ENCODE measurements at regions of chr17 and their contacts with region 1.

Region 1: GRCh38 chr17:50841949-50842354 is 6.6 kb downstream of the WFIKKN2 start:
- DNase-seq: no peak
- H3K4me3 Mint-ChIP-seq: no peak overlapping the region
- H3K27ac Mint-ChIP-seq: no peak overlapping the region
- H3K4me1 Mint-ChIP-seq: no peaks in the 10 kb centered on the region
- H3K27me3 Mint-ChIP-seq: no peaks in the 10 kb centered on the region

Region 2: GRCh38 chr17:50318501-50319285 is 523.3 kb before region 1 on chr17:
- intact Hi-C with region 1: no loop called
- DNase-seq: no peak
- H3K4me3 Mint-ChIP-seq: no peak overlapping the region
- H3K27ac Mint-ChIP-seq: no peak overlapping the region
- H3K4me1 Mint-ChIP-seq: peaks cover 4% of the 10 kb centered on the region
- H3K27me3 Mint-ChIP-seq: peaks cover 5% of the 10 kb centered on the region

Region 3: GRCh38 chr17:50783193-50783660 is 58.7 kb before region 1 on chr17:
- intact Hi-C with region 1: loop called (anchors 1 kb)
- DNase-seq: peak; percentile 68
- H3K4me3 Mint-ChIP-seq: no peak overlapping the region
- H3K27ac Mint-ChIP-seq: no peak overlapping the region
- H3K4me1 Mint-ChIP-seq: peaks cover 27% of the 10 kb centered on the region
- H3K27me3 Mint-ChIP-seq: peaks cover 32% of the 10 kb centered on the region

Region 4: DNA sequence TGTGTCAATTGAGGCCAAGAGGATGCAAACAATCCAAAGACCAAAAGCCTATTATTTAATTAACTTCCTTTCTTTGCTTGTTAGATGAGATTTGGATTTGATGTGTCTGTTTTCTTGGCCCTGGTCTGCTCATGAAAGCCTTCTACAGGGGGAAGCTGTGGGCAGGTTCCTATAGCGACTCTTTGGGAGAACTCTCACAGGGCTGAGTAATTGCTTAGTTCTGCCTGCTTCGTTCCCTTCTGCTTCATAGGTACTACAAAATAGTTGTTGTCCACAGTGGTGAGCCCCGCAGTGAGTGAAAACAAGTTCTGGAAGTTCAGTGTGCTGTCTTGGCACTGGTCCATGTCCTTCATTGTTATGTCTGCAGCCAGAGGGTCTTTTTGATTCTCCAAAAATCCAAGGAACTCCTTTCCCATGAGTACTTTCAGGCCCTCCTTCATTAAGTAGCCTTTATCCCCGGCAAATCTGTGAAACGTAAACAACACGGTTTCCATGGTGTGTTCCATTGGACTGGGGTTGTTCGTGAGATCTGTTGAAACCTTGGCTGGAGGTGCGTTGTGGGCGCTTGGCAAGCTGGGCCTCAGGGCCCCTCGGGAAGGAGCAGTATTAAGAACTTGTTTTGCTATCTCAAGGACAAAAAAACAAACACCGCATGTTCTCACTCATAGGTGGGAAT is 44.7 kb before region 1 on chr17:
- intact Hi-C with region 1: no loop called
- DNase-seq: no peak
- H3K4me3 Mint-ChIP-seq: no peak overlapping the region
- H3K27ac Mint-ChIP-seq: no peak overlapping the region
- H3K4me1 Mint-ChIP-seq: no peaks in the 10 kb centered on the region
- H3K27me3 Mint-ChIP-seq: no peaks in the 10 kb centered on the region

Region 5: GRCh38 chr17:50816771-50817751 is 24.9 kb before region 1 on chr17:
- intact Hi-C with region 1: loop called (anchors 1 kb)
- DNase-seq: peak; percentile 34
- H3K4me3 Mint-ChIP-seq: no peak overlapping the region
- H3K27ac Mint-ChIP-seq: no peak overlapping the region
- H3K4me1 Mint-ChIP-seq: peaks cover 8% of the 10 kb centered on the region
- H3K27me3 Mint-ChIP-seq: peaks cover 19% of the 10 kb centered on the region

Region 6: DNA sequence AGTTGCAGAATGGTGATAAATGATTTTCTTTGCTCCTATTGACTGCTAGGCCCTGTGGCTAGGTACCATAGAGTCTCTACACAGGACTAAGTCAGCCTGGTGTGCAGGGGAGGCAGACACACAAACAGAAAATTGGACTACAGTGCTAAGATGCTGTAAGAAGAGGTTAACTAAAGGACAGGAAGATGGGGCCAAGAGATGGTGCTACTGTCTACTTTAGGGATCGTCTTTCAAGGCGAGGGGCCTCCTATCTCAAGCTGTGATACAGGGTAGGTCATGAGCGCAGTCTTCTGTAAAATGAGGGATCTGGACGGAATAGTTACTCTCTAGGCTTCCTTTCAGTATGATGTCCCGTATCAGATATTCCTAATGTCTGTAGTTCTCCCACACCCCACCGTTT is 312.2 kb after region 1 on chr17:
- intact Hi-C with region 1: no loop called
- DNase-seq: peak; percentile 8
- H3K4me3 Mint-ChIP-seq: no peak overlapping the region
- H3K27ac Mint-ChIP-seq: no peak overlapping the region
- H3K4me1 Mint-ChIP-seq: peaks cover 21% of the 10 kb centered on the region
- H3K27me3 Mint-ChIP-seq: no peaks in the 10 kb centered on the region

Region 7: DNA sequence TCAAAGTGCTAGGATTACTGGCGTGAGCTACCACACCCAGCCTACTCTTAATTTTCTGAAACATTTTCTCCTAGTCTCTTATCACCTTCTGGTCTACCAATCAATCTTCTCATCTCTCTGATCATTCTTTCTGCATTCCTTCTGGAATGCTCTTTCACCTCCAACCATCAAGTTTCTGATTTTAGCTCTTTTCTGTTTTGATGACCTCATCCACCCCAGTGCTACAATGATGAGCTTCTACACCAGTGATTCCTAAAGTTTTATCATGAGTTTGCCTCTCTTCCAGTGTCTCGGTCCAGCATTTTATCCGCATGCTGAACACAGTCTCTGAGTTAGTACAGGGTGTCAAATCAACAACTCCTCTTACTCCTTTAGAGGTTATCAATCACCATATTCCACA is 355.8 kb after region 1 on chr17:
- intact Hi-C with region 1: no loop called
- DNase-seq: no peak
- H3K4me3 Mint-ChIP-seq: no peak overlapping the region
- H3K27ac Mint-ChIP-seq: no peak overlapping the region
- H3K4me1 Mint-ChIP-seq: peaks cover 9% of the 10 kb centered on the region
- H3K27me3 Mint-ChIP-seq: no peaks in the 10 kb centered on the region

Measured in activated T-helper 1 cell treated with anti-CD3 and anti-CD28 coated beads, Interleukin-12 subunit alpha, Interleukin-12 subunit beta, Interleukin-2, Interleukin-4 antibody, amounts not matched to agents 30 ng/mL and 10 ng/mL and 1 ng/mL, durations not matched to agents 14 hours and 24 hours and 36 hours (primary cell).